Activated CD8-positive, alpha-beta memory T cell treated with anti-CD3 and anti-CD28 coated beads, Interleukin-2, amount 10 ng/mL, durations not matched to agents 7 days and 5 days (primary cell): ENCODE measurements at regions of chr7 and their contacts with region 1.

Region 1: GRCh38 chr7:100632951-100633717 is 8.2 kb downstream of the TFR2 start:
- DNase-seq: peak; percentile 79
- ATAC-seq: peak; percentile 82
- H3K4me3 Mint-ChIP-seq: peak overlapping the region; percentile 82
- H3K27ac Mint-ChIP-seq: peak overlapping the region; percentile 92
- H3K4me1 Mint-ChIP-seq: peaks cover 40% of the 10 kb centered on the region
- H3K27me3 Mint-ChIP-seq: no peaks in the 10 kb centered on the region

Region 2: GRCh38 chr7:100372256-100372655 is 260.9 kb before region 1 on chr7:
- CTCF ChIA-PET with region 1: no interaction called
- DNase-seq: no peak
- ATAC-seq: peak; percentile 41
- H3K4me3 Mint-ChIP-seq: no peak overlapping the region
- H3K27ac Mint-ChIP-seq: peak overlapping the region; percentile 88
- H3K4me1 Mint-ChIP-seq: peaks cover 47% of the 10 kb centered on the region
- H3K27me3 Mint-ChIP-seq: no peaks in the 10 kb centered on the region

Region 3: DNA sequence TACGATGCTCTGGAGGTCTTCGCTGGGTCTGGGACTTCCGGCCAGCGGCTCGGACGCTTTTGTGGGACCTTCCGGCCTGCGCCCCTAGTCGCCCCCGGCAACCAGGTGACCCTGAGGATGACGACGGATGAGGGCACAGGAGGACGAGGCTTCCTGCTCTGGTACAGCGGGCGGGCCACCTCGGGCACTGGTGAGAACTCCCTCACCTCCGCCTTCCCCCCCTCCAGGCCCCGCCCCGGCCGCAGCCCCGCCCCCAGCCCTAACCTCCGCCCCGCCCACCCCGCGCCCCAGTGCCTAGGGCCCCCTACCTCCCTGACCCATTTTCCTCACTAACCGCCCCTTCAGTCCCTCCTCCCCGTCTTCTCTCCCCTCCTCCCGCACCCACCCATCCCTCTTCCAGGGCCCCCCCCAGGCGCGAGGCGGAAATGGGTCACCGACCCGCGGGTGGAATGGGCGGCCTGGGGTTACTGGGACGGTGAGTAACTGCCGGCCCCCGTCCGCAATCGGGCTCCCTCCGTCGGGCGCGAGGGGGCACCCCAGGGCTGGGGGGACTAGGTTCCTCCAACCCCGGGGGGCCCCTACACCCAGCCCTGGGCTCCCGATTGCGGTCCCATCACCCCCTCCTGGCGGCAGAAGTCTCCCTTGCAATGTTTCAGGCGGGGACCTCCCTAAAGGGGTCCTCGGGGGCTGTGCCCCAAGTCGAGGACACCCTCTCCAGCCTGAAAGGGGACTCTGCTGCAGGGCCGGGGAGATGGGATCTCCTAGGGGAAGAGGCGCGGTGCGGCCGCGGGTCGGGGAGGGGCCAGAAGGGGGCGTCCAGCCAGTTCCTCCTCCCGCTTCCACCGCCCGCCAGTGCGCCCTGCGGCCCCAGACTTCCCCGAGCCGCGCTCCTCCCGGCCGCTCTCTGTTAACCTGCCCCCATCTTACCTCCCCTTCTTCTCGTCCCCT is 28.8 kb before region 1 on chr7:
- CTCF ChIA-PET with region 1: interaction called, 22 read pairs
- DNase-seq: peak; percentile 91
- ATAC-seq: peak; percentile 78
- H3K4me3 Mint-ChIP-seq: peak overlapping the region; percentile 86
- H3K27ac Mint-ChIP-seq: peak overlapping the region; percentile 93
- H3K4me1 Mint-ChIP-seq: peaks cover 23% of the 10 kb centered on the region
- H3K27me3 Mint-ChIP-seq: peaks cover 5% of the 10 kb centered on the region

Region 4: GRCh38 chr7:100611974-100612729 is 21.0 kb before region 1 on chr7 and contains the start of gene MOSPD3:
- CTCF ChIA-PET with region 1: interaction called, 37 read pairs
- DNase-seq: peak; percentile 99
- ATAC-seq: peak; percentile 95
- H3K4me3 Mint-ChIP-seq: peak within 1 kb of the TSS; percentile 87
- H3K27ac Mint-ChIP-seq: peak within 1 kb of the TSS; percentile 100
- H3K4me1 Mint-ChIP-seq: peaks cover 22% of the 10 kb centered on the region
- H3K27me3 Mint-ChIP-seq: no peaks in the 10 kb centered on the region
- total RNA-seq, gene MOSPD3: 22.2 to 28.8 TPM

Region 5: DNA sequence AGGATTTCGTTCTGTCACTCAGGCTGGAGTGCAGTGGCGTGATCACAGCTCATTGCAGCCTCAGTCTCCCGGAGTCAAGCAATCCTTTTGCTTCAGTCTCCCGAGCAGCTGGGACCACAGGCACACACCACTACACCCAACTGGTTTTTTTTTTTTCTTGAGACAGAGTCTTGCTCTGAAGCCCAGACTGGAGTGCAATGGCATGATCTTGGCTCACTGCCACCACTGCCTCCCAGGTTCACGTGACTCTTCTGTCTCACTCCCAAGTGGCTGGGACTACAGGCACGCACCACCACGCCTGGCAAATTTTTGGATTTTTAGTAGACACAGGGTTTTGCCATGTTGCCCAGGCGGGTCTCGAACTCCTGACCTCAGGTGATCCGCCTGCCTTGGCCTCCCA is 29.2 kb after region 1 on chr7:
- CTCF ChIA-PET with region 1: interaction called, 16 read pairs
- DNase-seq: no peak
- ATAC-seq: no peak
- H3K4me3 Mint-ChIP-seq: no peak overlapping the region
- H3K27ac Mint-ChIP-seq: no peak overlapping the region
- H3K4me1 Mint-ChIP-seq: peaks cover 2% of the 10 kb centered on the region
- H3K27me3 Mint-ChIP-seq: peaks cover 20% of the 10 kb centered on the region